RWPE1 (cell line): ENCODE measurements at regions of chr1 and their contacts with region 1.

Region 1: GRCh38 chr1:206865013-206865671 is at the start of gene IL20:
- DNase-seq: peak; percentile 78
- H3K27ac ChIP-seq: no peak within 1 kb of the TSS
- CTCF ChIP-seq: peak; percentile 76

Region 2: GRCh38 chr1:206816390-206817287 is 48.5 kb before region 1 on chr1:
- CTCF ChIA-PET with region 1: no interaction called
- POLR2A ChIA-PET with region 1: no interaction called
- DNase-seq: no peak
- H3K27ac ChIP-seq: no peak overlapping the region
- CTCF ChIP-seq: no peak

Region 3: DNA sequence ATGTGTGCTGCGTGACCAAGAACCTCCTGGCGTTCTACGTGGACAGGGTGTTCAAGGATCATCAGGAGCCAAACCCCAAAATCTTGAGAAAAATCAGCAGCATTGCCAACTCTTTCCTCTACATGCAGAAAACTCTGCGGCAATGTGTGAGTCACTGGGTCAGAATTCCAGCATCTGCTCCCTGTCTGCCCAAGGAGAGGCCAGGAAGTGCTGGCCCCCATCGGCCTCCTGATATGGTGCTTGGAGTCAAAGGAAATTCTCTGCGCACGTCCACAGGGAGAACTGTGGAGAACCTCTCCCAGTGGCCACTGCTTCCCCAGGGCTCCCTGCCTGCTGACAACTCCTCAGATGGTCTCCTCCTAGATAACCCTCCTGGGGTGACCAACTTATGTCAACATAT is 25.3 kb before region 1 on chr1:
- CTCF ChIA-PET with region 1: interaction called, 10 read pairs
- POLR2A ChIA-PET with region 1: no interaction called
- DNase-seq: peak; percentile 66
- H3K27ac ChIP-seq: no peak overlapping the region
- CTCF ChIP-seq: no peak

Region 4: DNA sequence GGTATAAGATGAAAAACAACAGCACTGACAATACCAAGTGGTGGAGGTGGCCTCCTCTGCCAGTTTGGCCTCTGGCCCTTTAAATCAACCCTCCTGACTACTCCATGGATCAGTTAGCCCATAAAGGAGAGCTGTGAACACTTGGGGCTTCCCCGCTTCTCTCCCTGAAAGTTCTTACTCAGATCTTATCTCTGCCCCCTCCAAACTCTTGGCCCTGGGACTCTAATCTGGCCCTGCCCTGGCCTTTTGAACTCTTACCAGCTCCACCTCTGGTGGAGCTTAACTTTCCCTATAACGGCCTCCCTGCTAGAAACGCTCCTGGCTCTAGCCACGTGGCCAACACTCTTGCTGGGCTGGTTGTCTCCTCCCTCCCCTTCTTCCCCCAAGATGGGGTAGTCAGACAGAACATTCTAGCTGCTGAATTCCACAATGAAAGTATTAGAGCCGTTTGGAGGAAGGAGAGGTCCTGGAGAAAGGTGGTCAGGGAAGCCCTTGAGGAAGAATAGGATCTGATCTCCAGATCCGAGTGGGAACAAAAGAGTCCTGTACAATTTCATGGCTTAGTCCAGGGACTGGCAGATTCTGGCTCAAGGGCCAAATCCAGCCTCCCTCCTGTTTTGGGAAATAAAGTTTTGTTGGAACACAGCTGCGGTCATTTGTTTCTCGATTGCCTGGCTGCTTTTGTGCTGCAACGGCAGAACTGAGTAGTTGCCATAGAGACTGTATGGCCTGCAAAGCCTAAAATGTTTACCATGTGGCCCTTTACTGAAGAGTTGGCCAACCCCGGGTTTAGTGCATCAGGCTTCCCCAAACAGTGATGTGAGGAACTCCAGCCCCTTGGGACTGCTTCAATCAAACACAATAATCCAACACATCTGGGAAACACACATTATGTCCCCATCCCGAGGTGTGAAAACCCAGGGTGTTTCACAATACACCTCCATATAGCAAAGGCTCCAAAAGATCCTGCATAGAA is 90.6 kb after region 1 on chr1:
- CTCF ChIA-PET with region 1: no interaction called
- POLR2A ChIA-PET with region 1: no interaction called
- DNase-seq: no peak
- H3K27ac ChIP-seq: no peak overlapping the region
- CTCF ChIP-seq: no peak

Region 5: GRCh38 chr1:207052911-207053769 is 188.0 kb after region 1 on chr1 and contains the start of gene PFKFB2:
- CTCF ChIA-PET with region 1: no interaction called
- POLR2A ChIA-PET with region 1: no interaction called
- DNase-seq: peak; percentile 99
- H3K27ac ChIP-seq: peak within 1 kb of the TSS; percentile 93
- CTCF ChIP-seq: peak; percentile 14